ENCODE measurements at regions of chr17 and their contacts with region 1.

Region 1: DNA sequence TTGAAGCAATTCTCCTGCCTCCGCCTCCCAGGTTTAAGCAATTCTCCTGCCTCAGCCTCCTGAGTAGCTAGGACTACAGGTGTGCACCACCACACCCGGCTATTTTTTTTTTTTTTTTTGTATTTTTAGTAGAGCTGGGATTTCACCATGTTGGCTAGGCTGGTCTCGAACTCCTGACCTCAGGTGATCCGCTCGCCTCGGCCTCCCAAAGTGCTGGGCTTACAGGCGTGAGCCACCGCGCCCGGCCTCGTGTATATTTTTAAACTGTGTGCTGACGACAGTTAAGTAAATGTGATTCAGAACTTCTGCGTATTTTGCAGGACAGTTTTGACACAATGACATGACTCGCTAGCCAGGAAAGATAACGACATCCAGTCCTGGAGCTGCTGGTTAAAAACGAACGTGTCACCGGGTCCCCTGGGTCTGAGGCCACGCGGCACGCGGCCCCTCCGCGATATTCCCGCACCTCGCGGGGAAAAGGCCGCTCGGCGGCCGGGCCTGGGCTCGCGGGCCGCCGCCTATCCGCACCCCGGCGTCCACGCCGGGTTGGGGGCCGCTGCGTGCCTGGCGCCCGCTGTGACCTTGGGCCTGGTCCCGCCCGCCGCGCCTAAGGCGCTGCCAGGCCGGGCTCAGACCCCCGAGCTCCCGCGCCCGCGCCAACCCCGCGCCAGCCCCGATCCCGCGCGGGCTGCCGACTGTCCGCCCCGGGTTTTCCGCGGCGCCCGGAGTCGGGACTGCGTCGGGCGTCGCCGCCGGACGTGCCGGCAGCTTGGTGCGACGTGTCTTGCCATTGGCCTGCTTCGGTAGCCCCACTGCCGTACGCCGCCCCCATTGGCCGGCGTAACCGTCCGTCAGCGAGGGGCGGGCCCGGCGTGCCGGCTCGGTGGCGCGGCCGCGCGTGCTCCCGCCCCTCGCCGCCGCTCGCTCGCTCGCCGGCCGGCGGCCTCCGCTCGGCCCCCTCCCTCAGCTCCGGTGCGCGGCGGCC is at the start of gene FOXK2:
- DNase-seq: peak; percentile 99

Region 2: GRCh38 chr17:82494236-82495055 is 24.7 kb before region 1 on chr17:
- CTCF ChIA-PET with region 1: no interaction called
- POLR2A ChIA-PET with region 1: interaction called, 27 read pairs
- DNase-seq: peak; percentile 91

Region 3: GRCh38 chr17:82502207-82502606 is 16.9 kb before region 1 on chr17:
- CTCF ChIA-PET with region 1: interaction called, 6 read pairs
- POLR2A ChIA-PET with region 1: interaction called, 27 read pairs
- DNase-seq: no peak

Region 4: GRCh38 chr17:82536512-82537201 is 17.5 kb after region 1 on chr17:
- CTCF ChIA-PET with region 1: no interaction called
- POLR2A ChIA-PET with region 1: interaction called, 31 read pairs
- DNase-seq: no peak

Region 5: DNA sequence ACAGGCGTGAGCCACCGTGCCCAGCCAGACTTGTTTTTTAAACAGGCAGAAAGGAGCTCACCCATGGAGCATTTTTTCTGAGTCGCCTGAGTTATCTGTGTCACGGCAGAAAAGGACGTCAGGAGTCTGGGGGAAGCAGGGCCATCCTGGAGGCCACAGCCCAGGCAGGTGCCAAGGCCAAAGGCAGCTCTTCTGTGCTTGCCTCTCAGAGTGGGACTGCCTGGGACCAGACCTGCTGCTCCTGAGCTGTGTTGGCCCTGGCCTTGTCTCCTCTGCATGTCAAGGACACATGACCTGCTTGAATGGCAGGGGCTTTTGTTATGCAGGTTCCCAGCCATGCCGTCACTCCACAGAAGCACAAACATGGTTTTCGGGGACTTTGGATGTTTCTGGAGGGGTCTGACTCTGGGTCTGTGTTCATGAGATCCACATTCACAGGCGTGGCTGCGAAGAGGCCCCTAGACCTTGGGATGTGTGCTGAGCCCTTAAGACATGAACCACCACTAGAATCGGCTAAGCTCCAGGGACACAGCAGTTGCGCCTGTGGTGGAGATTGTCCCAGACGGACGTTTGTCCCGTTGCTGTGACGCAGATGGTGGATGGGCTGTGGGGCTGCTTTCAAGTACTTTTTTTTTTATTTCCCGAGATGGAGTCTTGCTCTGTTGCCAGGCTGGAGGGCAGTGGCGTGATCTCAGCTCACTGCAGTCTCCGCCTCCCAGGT is 34.3 kb after region 1 on chr17:
- CTCF ChIA-PET with region 1: interaction called, 12 read pairs
- POLR2A ChIA-PET with region 1: interaction called, 6 read pairs
- DNase-seq: no peak

Region 6: GRCh38 chr17:82636626-82637598 is 117.8 kb after region 1 on chr17:
- CTCF ChIA-PET with region 1: no interaction called
- POLR2A ChIA-PET with region 1: no interaction called
- DNase-seq: no peak